ENCODE measurements at regions of chr3 and their contacts with region 1.

Region 1: DNA sequence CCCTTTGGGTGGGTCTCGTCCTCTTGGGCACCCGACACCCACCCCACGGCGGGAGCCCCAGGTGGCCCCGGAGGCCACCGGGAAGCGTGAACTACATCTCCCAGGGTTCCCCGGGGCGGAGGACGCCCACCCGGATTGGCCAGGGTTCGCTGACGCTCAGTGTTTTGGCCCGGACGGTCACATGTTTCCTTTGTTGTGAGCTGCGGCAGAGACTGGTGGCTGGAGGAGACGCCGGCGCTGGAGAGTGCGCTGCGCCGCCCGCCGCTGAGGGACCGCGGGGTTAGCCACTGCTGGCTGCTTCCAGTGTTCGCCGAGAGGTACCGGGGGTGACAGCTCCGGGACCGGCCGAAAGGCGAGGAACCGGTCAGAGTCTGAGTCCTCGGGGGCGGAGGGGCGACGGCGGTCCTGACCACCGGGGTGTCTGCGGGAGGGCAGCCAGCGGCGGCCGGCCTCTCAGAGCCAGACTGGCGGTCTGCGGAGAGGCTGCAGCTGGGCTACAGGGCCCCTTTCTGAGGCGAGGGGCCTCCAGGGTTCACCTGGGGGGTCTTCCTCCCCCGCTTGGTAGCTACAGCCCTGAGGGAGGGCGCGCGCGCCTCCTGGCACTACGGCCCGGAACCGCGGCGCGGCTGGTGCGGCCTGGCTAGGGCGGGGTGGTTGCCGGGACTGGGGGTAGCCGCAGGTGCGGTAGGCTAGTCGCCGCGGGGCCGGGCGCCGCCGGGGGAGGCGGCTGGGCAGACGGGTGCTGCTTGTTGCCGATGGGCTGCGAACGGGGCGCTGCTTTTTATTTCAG is at the start of gene KLHL24:
- DNase-seq: peak; percentile 89
- H3K4me3 Mint-ChIP-seq: peak within 1 kb of the TSS; percentile 92
- H3K27ac Mint-ChIP-seq: peak within 1 kb of the TSS; percentile 97
- H3K4me1 Mint-ChIP-seq: peaks cover 24% of the 10 kb centered on the region
- H3K27me3 Mint-ChIP-seq: peaks cover 2% of the 10 kb centered on the region
- total RNA-seq, gene KLHL24: 8.2 and 8.7 TPM in 2 replicates

Region 2: DNA sequence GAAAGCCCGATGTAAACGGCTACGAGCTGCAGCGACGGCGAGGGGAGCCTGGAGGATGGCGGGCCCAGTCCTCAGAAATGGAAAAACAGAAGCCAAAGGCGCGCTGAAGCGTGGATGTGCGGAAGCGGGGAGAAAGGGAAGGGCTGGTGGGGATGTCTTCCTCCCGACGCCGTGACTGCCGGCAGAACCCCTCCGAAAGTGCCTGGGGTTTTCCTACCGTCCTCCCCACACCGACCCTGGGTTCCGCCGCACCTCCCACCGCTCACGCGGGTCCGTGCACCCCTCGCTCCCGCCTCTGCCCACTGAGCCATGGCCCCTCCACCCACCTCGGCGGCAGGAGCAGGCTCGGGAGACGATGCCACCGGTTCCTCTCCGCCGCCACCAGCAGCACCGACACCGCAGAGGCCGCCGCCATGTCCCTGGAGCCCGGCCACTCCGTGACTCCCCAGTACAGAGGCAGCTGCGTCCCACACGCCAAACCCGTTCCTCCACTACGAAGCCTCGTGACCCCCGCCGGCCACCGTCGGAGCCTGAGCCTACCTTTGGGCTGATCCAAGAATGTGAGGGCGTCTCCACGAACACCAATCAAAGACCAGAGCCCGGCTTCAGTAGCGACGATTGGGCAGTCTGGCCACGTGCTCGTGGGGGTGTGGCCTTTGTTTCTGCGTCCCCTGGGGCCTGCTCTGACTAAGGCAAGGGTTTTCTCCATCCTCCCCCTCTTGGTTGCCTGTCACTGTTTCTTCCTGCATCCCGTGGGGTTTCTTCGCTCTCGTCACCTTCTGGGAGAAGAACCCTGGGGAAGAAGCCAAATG is 536.4 kb before region 1 on chr3 and contains the start of gene MCCC1:
- intact Hi-C with region 1: loop called (anchors 1 kb)
- DNase-seq: peak; percentile 97
- H3K4me3 Mint-ChIP-seq: peak within 1 kb of the TSS; percentile 97
- H3K27ac Mint-ChIP-seq: peak within 1 kb of the TSS; percentile 92
- H3K4me1 Mint-ChIP-seq: peaks cover 41% of the 10 kb centered on the region
- H3K27me3 Mint-ChIP-seq: no peaks in the 10 kb centered on the region
- total RNA-seq, gene MCCC1: 27.3 and 30.0 TPM in 2 replicates

Region 3: GRCh38 chr3:183427876-183428446 is 207.7 kb before region 1 on chr3:
- intact Hi-C with region 1: loop called (anchors 1 kb)
- DNase-seq: peak; percentile 14
- H3K4me3 Mint-ChIP-seq: peak overlapping the region; percentile 82
- H3K27ac Mint-ChIP-seq: peak overlapping the region; percentile 42
- H3K4me1 Mint-ChIP-seq: peaks cover 33% of the 10 kb centered on the region
- H3K27me3 Mint-ChIP-seq: peaks cover 9% of the 10 kb centered on the region

Region 4: GRCh38 chr3:183515968-183516851 is 119.4 kb before region 1 on chr3:
- intact Hi-C with region 1: loop called (anchors 2 kb)
- DNase-seq: peak; percentile 58
- H3K4me3 Mint-ChIP-seq: peak overlapping the region; percentile 34
- H3K27ac Mint-ChIP-seq: peak overlapping the region; percentile 82
- H3K4me1 Mint-ChIP-seq: peaks cover 77% of the 10 kb centered on the region
- H3K27me3 Mint-ChIP-seq: no peaks in the 10 kb centered on the region

Region 5: DNA sequence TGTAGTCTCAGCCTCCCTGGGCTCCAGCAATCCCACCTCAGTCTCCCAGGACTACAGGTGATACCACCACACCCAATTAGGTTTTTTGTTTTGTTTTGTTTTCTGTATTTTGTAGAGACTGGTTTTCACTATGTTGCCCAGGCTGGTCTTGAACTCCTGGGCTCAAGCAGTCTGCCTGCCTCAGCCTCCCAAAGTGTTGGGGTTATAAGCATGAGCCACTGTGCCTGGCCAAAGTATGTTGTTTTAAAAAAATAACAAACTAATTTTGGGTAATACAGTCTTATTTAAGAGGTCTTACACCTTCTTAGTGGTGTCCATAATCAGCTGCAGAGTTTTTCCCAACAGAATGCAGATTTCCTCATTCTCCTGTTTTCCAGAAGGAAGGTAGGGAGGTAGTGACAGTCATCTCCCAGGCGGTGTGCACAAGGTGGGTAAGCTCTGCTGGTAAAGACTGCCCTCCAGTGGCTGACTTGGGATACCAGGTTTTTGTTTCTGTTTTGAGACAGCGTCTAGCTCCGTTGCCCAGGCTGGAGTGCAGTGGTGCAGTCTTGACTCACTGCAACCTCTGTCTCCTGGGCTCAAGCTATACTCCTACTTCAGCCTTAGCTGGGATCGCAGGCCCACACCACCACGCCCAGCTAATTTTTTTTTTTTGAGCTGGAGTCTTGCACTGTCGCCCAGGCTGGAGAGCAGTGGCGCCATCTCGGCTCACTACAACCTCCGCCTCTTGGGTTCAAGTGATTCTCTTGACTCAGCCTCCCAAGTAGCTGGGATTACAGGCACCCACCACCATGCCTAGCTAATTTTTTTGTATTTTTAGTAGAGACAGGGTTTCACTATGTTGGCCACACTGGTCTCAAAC is 131.3 kb after region 1 on chr3:
- intact Hi-C with region 1: loop called (anchors 5 kb)
- DNase-seq: peak; percentile 63
- H3K4me3 Mint-ChIP-seq: no peak overlapping the region
- H3K27ac Mint-ChIP-seq: no peak overlapping the region
- H3K4me1 Mint-ChIP-seq: peaks cover 7% of the 10 kb centered on the region
- H3K27me3 Mint-ChIP-seq: no peaks in the 10 kb centered on the region

Region 6: GRCh38 chr3:184135149-184135910 is 499.7 kb after region 1 on chr3 and contains the start of gene EIF2B5:
- intact Hi-C with region 1: loop called (anchors 5 kb)
- DNase-seq: peak; percentile 83
- H3K4me3 Mint-ChIP-seq: peak within 1 kb of the TSS; percentile 92
- H3K27ac Mint-ChIP-seq: peak within 1 kb of the TSS; percentile 85
- H3K4me1 Mint-ChIP-seq: peaks cover 31% of the 10 kb centered on the region
- H3K27me3 Mint-ChIP-seq: no peaks in the 10 kb centered on the region
- total RNA-seq, gene EIF2B5: 75.6 and 75.9 TPM in 2 replicates

Region 7: GRCh38 chr3:184154885-184155643 is 519.4 kb after region 1 on chr3 and contains the start of gene DVL3:
- intact Hi-C with region 1: no loop called
- DNase-seq: peak; percentile 51
- H3K4me3 Mint-ChIP-seq: peak within 1 kb of the TSS; percentile 95
- H3K27ac Mint-ChIP-seq: peak within 1 kb of the TSS; percentile 88
- H3K4me1 Mint-ChIP-seq: peaks cover 20% of the 10 kb centered on the region
- H3K27me3 Mint-ChIP-seq: peaks cover 5% of the 10 kb centered on the region
- total RNA-seq, gene DVL3: 59.4 and 61.5 TPM in 2 replicates

Region 8: DNA sequence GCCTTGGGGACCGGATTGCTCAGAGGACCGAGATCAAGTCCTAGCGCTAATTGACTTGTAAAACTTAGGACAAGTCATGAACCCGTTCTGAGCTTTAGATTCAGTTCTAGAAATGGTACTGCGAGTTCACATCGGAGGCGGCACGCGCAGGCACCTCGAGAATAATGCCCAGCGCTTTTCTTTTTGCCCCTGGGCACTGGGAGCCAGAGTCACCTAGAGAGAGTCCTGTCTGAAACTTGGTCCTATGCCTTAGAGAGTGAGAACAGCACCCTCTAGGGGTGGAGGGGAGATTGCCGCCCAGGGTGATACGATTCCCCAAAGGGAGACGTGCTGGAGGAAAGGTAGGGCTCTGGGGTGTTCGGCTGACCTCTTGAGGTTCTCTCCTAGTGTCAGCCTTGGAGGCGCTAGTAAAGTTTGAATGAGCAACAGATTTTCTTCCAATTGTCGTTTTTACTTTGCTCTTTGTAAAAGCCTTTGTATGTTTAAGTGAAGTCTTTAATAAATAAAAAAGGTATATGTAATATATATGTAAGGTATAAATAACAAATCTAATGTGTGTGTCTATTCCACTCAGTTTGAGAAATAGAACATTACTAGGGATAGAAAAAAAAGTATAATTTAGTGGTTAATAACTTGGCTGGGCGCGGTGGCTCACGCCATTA is 614.7 kb after region 1 on chr3:
- intact Hi-C with region 1: loop called (anchors 1 kb)
- DNase-seq: peak; percentile 85
- H3K4me3 Mint-ChIP-seq: peak overlapping the region; percentile 93
- H3K27ac Mint-ChIP-seq: peak overlapping the region; percentile 97
- H3K4me1 Mint-ChIP-seq: peaks cover 24% of the 10 kb centered on the region
- H3K27me3 Mint-ChIP-seq: no peaks in the 10 kb centered on the region

Measured in activated T-helper 1 cell treated with anti-CD3 and anti-CD28 coated beads, Interleukin-12 subunit alpha, Interleukin-12 subunit beta, Interleukin-2, Interleukin-4 antibody, amounts not matched to agents 30 ng/mL and 10 ng/mL and 1 ng/mL, durations not matched to agents 14 hours and 24 hours and 36 hours (primary cell).